ENCODE measurements at regions of chr6 and their contacts with region 1.

Region 1: GRCh38 chr6:48476257-48476656 is 365.3 kb upstream of the PTCHD4 start:
- DNase-seq: peak; percentile 32
- ATAC-seq: peak; percentile 82
- H3K4me3 ChIP-seq: no peak overlapping the region
- H3K27ac ChIP-seq: no peak overlapping the region
- H3K4me1 ChIP-seq: no peaks in the 10 kb centered on the region
- H3K27me3 ChIP-seq: no peaks in the 10 kb centered on the region
- CTCF ChIP-seq: peak; percentile 64
- EP300 ChIP-seq: no peak
- POLR2A ChIP-seq: no peak
- RAD21 ChIP-seq: no peak

Region 2: GRCh38 chr6:48087448-48087847 is 388.8 kb before region 1 on chr6:
- CTCF ChIA-PET with region 1: no interaction called
- POLR2A ChIA-PET with region 1: no interaction called
- in situ Hi-C with region 1: no loop called
- intact Hi-C with region 1: loop called (anchors 10 kb)
- DNase-seq: no peak
- ATAC-seq: no peak; the same call in 2 of the 3 replicates
- H3K4me3 ChIP-seq: no peak overlapping the region
- H3K27ac ChIP-seq: no peak overlapping the region
- H3K4me1 ChIP-seq: no peaks in the 10 kb centered on the region
- H3K27me3 ChIP-seq: no peaks in the 10 kb centered on the region
- CTCF ChIP-seq: no peak
- EP300 ChIP-seq: no peak
- POLR2A ChIP-seq: no peak
- RAD21 ChIP-seq: no peak

Region 3: GRCh38 chr6:48915591-48915990 is 439.3 kb after region 1 on chr6:
- CTCF ChIA-PET with region 1: no interaction called
- POLR2A ChIA-PET with region 1: no interaction called
- in situ Hi-C with region 1: no loop called
- intact Hi-C with region 1: no loop called
- DNase-seq: no peak
- ATAC-seq: no peak
- H3K4me3 ChIP-seq: no peak overlapping the region
- H3K27ac ChIP-seq: no peak overlapping the region
- H3K4me1 ChIP-seq: no peaks in the 10 kb centered on the region
- H3K27me3 ChIP-seq: no peaks in the 10 kb centered on the region
- CTCF ChIP-seq: no peak
- EP300 ChIP-seq: no peak
- POLR2A ChIP-seq: no peak
- RAD21 ChIP-seq: no peak